ENCODE measurements at regions of chr12 and their contacts with region 1.

Region 1: GRCh38 chr12:45762185-45763110 is 32.9 kb downstream of the ARID2 start:
- DNase-seq: peak; percentile 51 to 70
- H3K4me3 ChIP-seq: no peak overlapping the region
- H3K4me3 Mint-ChIP-seq: no peak overlapping the region
- H3K27ac Mint-ChIP-seq: peak overlapping the region; percentile 45
- H3K4me1 ChIP-seq: peaks cover 13% of the 10 kb centered on the region
- H3K4me1 Mint-ChIP-seq: peaks cover 13% of the 10 kb centered on the region
- H3K27me3 ChIP-seq: no peaks in the 10 kb centered on the region
- H3K27me3 Mint-ChIP-seq: no peaks in the 10 kb centered on the region
- CTCF ChIP-seq: peak; percentile 65 to 87

Region 2: GRCh38 chr12:45775964-45776363 is 13.5 kb after region 1 on chr12:
- CTCF ChIA-PET with region 1: interaction called, 11 read pairs
- POLR2A ChIA-PET with region 1: no interaction called
- intact Hi-C with region 1: no loop called
- DNase-seq: no peak
- H3K4me3 ChIP-seq: no peak overlapping the region
- H3K4me3 Mint-ChIP-seq: no peak overlapping the region
- H3K27ac Mint-ChIP-seq: no peak overlapping the region
- H3K4me1 ChIP-seq: peaks cover 10% of the 10 kb centered on the region
- H3K4me1 Mint-ChIP-seq: peaks cover 9% of the 10 kb centered on the region
- H3K27me3 ChIP-seq: no peaks in the 10 kb centered on the region
- H3K27me3 Mint-ChIP-seq: no peaks in the 10 kb centered on the region
- CTCF ChIP-seq: no peak

Region 3: DNA sequence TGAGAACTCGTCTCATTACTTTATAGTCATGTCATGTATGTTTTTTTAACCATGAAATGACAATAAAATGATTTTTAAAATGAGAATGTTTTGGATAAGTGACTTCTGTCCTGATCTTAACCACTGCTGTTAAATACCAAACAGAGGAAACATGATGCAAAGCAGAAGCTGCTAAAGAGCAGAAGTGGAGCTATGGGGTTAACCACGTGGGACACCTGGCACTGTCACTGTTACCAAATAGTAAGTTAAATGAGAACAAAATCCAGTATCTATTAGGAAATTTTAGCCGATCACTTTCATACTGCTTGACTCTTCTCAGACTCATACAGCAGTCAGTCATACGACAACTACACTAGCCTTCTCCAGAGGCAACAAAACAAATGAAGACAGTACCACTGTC is 145.5 kb after region 1 on chr12:
- CTCF ChIA-PET with region 1: no interaction called
- POLR2A ChIA-PET with region 1: no interaction called
- intact Hi-C with region 1: loop called (anchors 5 kb)
- DNase-seq: no peak
- H3K4me3 ChIP-seq: no peak overlapping the region
- H3K4me3 Mint-ChIP-seq: no peak overlapping the region
- H3K27ac Mint-ChIP-seq: no peak overlapping the region
- H3K4me1 ChIP-seq: no peaks in the 10 kb centered on the region
- H3K4me1 Mint-ChIP-seq: peaks cover 7% of the 10 kb centered on the region
- H3K27me3 ChIP-seq: no peaks in the 10 kb centered on the region
- H3K27me3 Mint-ChIP-seq: no peaks in the 10 kb centered on the region
- CTCF ChIP-seq: no peak

Measured in Caco-2 (cell line).